Tibial artery (tissue), 4 donors: ENCODE measurements at regions of chr6 and their contacts with region 1.

Region 1: DNA sequence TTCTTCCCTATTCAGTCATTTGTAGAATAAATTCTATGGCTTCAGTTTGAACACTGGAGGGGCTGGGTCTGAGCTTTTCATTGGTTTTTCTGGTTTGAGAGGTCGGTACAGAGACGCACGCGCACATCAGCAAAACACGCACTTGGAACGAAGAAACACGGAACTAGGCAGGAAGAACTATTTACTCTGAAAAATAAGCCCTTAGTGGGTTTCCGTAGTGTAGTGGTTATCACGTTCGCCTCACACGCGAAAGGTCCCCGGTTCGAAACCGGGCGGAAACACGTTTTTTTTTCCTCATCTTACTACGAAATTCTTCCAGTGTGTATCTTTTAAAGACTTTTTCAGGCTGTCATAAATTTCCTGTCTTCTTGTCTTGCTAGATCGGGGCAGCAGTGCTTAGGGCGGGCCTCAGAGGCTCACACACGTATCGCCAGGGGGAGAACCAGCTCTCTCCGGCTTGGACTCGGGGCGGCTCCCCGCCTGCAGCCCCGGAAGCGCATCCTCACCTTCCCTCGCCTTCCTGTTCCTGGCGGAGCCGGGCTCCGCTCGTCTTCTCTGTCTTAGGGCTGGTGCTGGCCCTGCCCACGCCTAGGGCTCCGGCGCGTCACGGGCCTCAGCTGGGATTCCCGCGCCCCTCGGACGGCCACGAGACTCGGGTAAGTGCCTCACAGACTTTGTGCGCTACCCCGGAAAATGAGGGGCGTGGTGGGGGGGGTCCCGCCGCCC is at the start of gene HMGN4:
- DNase-seq: peak; percentile 78 to 89
- H3K4me3 ChIP-seq: peak within 1 kb of the TSS; percentile 75 to 86
- H3K27ac ChIP-seq: peak within 1 kb of the TSS; percentile 94 to 95
- H3K4me1 ChIP-seq: peaks cover 0 to 57% (median 25%) of the 10 kb centered on the region in 4 donors
- H3K27me3 ChIP-seq: no peaks in the 10 kb centered on the region
- CTCF ChIP-seq: no peak

Region 2: GRCh38 chr6:24666641-24667377 is 1871.2 kb before region 1 on chr6 and contains the starts of genes ACOT13 and TDP2:
- intact Hi-C with region 1: no loop called
- DNase-seq: peak; percentile 92 to 98
- H3K4me3 ChIP-seq: peak within 1 kb of the TSS; percentile 74 to 81
- H3K27ac ChIP-seq: peak within 1 kb of the TSS; percentile 85 to 86
- H3K4me1 ChIP-seq: peaks cover 0 to 40% (median 25%) of the 10 kb centered on the region in 4 donors
- H3K27me3 ChIP-seq: no peaks in the 10 kb centered on the region
- CTCF ChIP-seq: peak; percentile 59 to 62

Region 3: DNA sequence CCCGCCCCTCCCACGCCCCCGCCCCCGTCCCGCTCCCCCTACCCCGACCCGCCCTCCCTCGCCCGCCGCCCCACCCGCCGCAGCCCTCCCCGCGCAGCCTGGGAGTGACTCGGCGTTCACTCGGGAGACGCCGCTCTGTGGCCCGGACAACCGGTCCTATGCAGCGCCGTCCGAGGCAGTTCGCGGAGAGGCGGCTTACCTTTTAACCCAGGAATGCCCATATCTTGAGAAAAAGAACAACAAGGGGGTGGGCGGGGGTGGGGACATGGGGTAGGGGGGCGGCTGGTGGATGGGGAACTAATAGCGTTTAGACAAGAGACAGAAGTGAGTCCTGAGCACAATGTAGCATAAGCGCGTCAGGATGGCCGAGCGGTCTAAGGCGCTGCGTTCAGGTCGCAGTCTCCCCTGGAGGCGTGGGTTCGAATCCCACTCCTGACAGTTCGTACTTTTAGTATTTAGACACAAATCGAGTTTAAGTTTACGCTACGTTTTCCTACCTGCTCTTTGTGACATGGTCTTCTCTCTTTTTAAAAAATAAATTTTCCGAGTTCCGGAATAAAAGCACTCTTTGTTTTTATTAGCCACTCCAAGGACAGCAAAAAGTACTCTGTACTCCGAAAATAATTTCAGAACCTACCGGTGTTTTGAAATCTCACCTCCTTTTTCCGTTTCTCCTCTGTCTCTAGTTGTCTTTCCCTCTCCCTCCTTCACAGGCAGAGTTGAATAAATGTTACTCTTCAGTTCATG is 17.0 kb before region 1 on chr6:
- intact Hi-C with region 1: loop called (anchors 2 kb)
- DNase-seq: peak; percentile 85 to 92
- H3K4me3 ChIP-seq: peak overlapping the region; percentile 59 to 76
- H3K27ac ChIP-seq: peak overlapping the region; percentile 96 to 97
- H3K4me1 ChIP-seq: peaks cover 0 to 11% (median 0%) of the 10 kb centered on the region in 4 donors
- H3K27me3 ChIP-seq: no peaks in the 10 kb centered on the region
- CTCF ChIP-seq: no peak

Region 4: DNA sequence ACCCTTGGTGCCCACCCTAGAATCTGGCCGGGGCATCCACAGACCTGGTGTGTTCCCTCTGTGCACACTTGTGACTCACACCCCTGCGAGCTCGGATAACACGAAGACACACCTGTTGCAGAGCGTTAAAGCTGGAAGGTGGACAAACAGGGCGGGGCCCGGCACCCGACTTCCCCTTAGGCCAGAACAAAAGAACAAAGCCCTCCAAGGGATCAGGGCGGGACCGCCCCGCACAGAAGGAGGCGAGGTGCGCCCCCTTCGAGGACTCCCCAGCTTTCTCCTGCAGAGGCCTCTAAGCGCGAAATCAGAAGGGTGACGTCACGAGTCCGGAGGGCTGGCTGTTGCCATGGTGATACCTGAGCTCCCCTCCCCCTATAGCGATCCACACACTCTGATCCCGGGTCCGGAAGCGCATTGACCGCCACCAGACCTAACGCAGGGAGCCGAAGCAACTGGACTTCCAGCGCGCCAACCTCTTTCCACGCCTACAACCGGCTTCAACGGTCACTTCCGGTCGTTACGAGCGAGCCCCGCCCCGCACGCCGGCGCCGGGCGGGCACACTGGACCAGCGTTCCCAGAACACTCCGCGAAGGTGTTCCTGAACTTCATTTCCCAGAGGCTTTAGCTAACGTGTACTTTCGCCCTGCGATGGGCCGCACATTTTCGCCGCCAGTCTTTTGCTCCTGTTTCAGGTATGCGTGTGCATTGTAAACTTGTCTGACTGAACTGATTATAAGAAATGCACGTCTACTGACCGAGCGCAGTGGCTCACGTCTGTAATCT is 934.8 kb after region 1 on chr6 and contains the start of gene ZNF184:
- intact Hi-C with region 1: loop called (anchors 10 kb)
- DNase-seq: peak; percentile 93 to 98
- H3K4me3 ChIP-seq: peak within 1 kb of the TSS; percentile 78 to 89
- H3K27ac ChIP-seq: peak within 1 kb of the TSS; percentile 84 to 91
- H3K4me1 ChIP-seq: peaks cover 0 to 27% (median 16%) of the 10 kb centered on the region in 4 donors
- H3K27me3 ChIP-seq: no peaks in the 10 kb centered on the region
- CTCF ChIP-seq: peak in 1 of 2 experiments; percentile 10